T-cell (primary cell): ENCODE measurements at regions of chr12 and their contacts with region 1.

Region 1: DNA sequence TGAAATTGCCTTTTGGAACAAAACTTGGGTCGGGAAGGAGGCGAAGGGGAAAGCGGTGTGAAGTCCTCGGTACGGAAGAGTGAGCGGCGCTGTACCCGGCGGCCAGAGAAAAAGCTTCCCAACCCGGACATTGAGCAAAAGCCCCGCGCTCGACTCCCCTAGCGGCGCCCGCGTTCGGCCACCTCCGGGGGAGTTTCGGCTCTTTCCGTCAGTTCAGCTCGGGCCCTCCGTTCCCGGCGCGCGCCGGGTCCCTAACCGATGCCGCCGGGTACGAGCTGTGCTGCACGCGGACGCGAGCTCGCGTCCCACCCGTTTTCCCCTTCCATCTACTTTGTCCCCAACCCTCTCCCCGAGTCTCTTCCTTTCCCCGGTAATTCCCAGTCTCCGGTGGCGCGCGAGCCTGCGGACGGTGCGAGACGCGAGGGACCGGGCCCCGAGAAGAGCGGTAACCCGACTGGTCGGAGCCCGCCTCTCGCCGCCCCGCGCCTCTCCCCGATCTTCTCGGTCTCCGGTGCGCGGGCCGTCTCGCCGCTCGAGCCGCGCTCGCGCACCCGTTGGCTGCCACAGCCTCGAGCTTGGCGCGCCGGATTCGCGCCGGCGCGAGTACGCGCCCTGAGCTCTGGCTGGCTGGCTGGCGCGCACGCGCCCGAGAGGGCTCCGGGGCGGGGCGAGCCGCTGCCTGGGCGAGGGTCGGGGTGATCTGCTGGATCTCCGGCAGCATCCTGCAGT is 446 bp upstream of the SPATS2 start:
- DNase-seq: peak; percentile 67 to 89 (median 81)
- ATAC-seq: peak; percentile 83 to 89 (median 87)
- H3K4me3 ChIP-seq: peak overlapping the region; percentile 82 to 97
- H3K4me3 Mint-ChIP-seq: peak overlapping the region; percentile 84 to 97 (median 96)
- H3K27ac ChIP-seq: peak overlapping the region; percentile 64
- H3K27ac Mint-ChIP-seq: peak overlapping the region; percentile 92 to 96
- H3K4me1 ChIP-seq: peaks cover 0 to 15% of the 10 kb centered on the region in 2 experiments
- H3K4me1 Mint-ChIP-seq: peaks cover 30 to 32% (median 32%) of the 10 kb centered on the region in 3 donors
- H3K27me3 ChIP-seq: no peaks in the 10 kb centered on the region
- H3K27me3 Mint-ChIP-seq: no peaks in the 10 kb centered on the region

Region 2: DNA sequence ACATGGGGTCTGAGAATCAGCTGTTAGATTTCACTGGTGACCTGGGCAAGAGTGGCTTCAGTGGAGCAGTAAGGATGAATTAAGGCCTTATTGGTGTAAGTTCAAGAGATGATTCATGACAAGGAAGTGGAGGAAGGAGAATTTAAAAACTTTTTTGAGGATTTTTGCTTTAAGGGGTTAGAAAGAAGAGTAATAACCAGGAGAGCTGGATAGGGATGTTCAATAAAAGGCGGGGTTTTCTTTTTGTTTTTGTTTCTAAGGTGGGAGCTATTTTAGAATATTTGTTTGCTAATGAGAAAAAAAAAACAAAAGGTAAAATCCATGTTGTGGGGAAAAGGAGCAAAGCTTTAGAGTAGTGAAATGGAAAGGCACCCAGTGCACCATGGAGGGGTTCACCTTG is 220.4 kb before region 1 on chr12:
- CTCF ChIA-PET with region 1: no interaction called
- POLR2A ChIA-PET with region 1: no interaction called
- DNase-seq: no peak
- ATAC-seq: no peak
- H3K4me3 ChIP-seq: no peak overlapping the region
- H3K4me3 Mint-ChIP-seq: no peak overlapping the region
- H3K27ac ChIP-seq: no peak overlapping the region
- H3K27ac Mint-ChIP-seq: no peak overlapping the region
- H3K4me1 ChIP-seq: no peaks in the 10 kb centered on the region
- H3K4me1 Mint-ChIP-seq: peaks cover 0 to 6% (median 0%) of the 10 kb centered on the region in 3 donors
- H3K27me3 ChIP-seq: no peaks in the 10 kb centered on the region
- H3K27me3 Mint-ChIP-seq: no peaks in the 10 kb centered on the region

Region 3: GRCh38 chr12:49562233-49562632 is 195.4 kb after region 1 on chr12:
- CTCF ChIA-PET with region 1: no interaction called
- POLR2A ChIA-PET with region 1: interaction called in 1 of 2 experiments, 11 read pairs
- DNase-seq: no peak
- ATAC-seq: no peak
- H3K4me3 ChIP-seq: no peak overlapping the region
- H3K4me3 Mint-ChIP-seq: no peak overlapping the region
- H3K27ac ChIP-seq: no peak overlapping the region
- H3K27ac Mint-ChIP-seq: no peak overlapping the region
- H3K4me1 ChIP-seq: peaks cover 13 to 41% of the 10 kb centered on the region in 2 experiments
- H3K4me1 Mint-ChIP-seq: peaks cover 24 to 42% (median 33%) of the 10 kb centered on the region in 3 donors
- H3K27me3 ChIP-seq: no peaks in the 10 kb centered on the region
- H3K27me3 Mint-ChIP-seq: no peaks in the 10 kb centered on the region